A549 (cell line): ENCODE measurements at regions of chr13 and their contacts with region 1.

Region 1: DNA sequence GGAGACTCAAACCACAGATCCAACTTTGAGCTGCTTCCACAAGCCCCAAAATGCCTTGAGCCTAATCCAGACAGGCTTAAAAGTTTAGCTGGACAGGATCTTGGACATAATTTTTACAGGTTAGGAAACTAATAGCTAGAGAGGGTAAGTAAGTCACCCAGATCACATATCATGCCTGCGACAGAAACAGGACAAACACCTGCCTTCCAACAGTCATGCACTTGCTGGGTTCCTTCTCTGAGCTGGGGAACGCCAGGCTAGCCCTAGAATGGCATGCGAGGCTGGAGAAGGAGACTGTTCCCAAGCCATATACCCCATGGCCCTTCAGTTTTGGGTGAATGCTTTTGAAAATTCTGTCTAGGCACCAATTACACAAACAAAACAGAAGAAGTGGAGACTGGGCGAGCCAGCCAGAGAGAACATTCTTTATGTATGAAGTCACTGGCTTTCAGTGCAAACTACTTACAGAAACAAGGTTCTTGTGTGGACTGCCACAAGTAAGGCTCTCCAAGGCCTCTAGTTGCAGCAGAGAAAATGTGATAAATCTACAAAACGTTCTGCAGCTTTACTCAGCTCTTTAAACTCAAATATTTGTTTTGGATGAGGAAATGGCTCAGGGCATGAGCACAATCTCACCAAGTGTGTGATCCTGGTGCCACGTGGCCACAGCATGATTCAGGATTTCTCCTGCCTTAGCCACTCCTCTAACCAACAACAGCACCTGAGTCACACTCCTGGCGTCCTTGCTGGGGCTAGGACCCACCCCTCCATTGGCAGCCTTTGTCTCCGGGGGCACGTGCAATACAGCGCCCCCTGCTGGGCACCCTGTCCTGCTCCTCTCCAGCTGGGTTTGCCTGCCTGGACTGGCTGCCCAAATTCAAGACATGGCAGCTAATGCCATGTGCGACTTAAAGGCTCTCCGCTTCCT is 73.4 kb upstream of the UBL3 start:
- DNase-seq: peak; percentile 87 to 98
- ATAC-seq: peak; percentile 92 to 93
- H3K4me3 ChIP-seq: 0 out of 3 replicates have a peak overlapping the region, but pooled peaks have one; percentile 14
- H3K27ac ChIP-seq: peak overlapping the region; percentile 94 to 99
- H3K4me1 ChIP-seq: peaks cover 60% of the 10 kb centered on the region
- CTCF ChIP-seq: peak; percentile 73
- EP300 ChIP-seq: peak; percentile 72 to 75; a peak in 2 of 5 replicates
- POLR2A ChIP-seq: no peak
- RAD21 ChIP-seq: peak; percentile 52 to 56

Region 2: DNA sequence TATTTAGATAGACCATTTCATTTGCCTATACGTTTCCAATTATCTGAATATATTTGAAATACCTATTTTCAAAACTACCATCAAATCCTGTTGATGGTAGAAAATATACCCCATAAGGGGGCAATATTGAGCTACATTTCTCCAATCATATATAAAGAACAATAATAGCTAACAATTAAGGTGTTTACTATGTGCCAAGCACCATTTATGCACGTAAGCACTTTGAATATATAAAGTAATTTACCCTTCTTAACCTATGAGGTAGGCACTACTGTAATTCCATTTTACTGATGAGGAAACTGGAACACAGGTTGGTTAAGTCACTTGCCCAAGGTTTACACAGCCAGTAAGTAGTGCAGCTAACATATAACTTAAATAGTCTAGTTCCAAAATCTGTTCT is 152.6 kb before region 1 on chr13:
- CTCF ChIA-PET with region 1: interaction called, 15 read pairs
- POLR2A ChIA-PET with region 1: interaction called, 3 read pairs
- DNase-seq: peak in 1 of 2 experiments; percentile 36
- ATAC-seq: peak in 1 of 2 experiments; percentile 56; a peak in 2 of 6 replicates
- H3K4me3 ChIP-seq: no peak overlapping the region
- H3K27ac ChIP-seq: no peak overlapping the region
- H3K4me1 ChIP-seq: peaks cover 3% of the 10 kb centered on the region; the same call in 1 of the 3 replicates
- CTCF ChIP-seq: peak; percentile 60
- EP300 ChIP-seq: no peak
- POLR2A ChIP-seq: no peak
- RAD21 ChIP-seq: peak; percentile 72 to 75

Region 3: DNA sequence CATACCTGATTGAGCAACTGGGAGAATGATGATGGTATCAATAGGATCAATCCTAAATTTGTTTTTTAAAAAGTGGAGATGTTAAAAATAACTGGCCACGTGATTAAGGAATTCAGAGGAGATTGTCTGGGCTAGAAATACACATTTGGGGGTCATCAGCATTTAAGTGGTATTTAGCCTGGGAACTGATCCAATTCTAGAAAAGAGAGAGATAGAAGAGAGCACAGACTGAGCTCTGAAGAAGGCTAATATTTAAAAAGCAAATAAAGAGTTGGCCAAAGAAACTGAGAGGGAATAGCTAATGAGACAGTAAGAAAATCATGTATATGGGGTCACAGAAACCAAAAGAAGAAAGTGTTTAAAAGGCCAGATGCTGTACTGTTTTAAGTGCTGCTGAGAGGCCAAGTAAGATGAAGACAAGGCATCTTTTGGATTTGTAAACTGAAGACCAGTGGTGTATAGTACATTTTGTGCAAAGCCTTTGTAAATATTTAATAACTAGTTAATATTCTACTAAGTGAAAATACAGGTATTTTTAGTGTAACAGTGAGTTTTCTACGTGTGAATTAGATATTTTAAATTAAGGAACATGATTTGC is 113.6 kb before region 1 on chr13:
- CTCF ChIA-PET with region 1: no interaction called
- POLR2A ChIA-PET with region 1: no interaction called
- DNase-seq: no peak
- ATAC-seq: no peak
- H3K4me3 ChIP-seq: no peak overlapping the region
- H3K27ac ChIP-seq: no peak overlapping the region; a peak in 1 of 6 replicates
- H3K4me1 ChIP-seq: peaks cover 17% of the 10 kb centered on the region; the same call in 2 of the 3 replicates
- CTCF ChIP-seq: no peak
- EP300 ChIP-seq: no peak
- POLR2A ChIP-seq: no peak
- RAD21 ChIP-seq: no peak

Region 4: GRCh38 chr13:29850224-29850898 is 73.5 kb before region 1 on chr13 and contains the start of gene UBL3:
- CTCF ChIA-PET with region 1: interaction called, 51 read pairs
- POLR2A ChIA-PET with region 1: interaction called, 61 read pairs
- DNase-seq: peak; percentile 87 to 94
- ATAC-seq: peak; percentile 89
- H3K4me3 ChIP-seq: peak within 1 kb of the TSS; percentile 65
- H3K27ac ChIP-seq: peak within 1 kb of the TSS; percentile 91 to 97
- H3K4me1 ChIP-seq: peaks cover 37% of the 10 kb centered on the region
- CTCF ChIP-seq: no peak
- EP300 ChIP-seq: no peak
- POLR2A ChIP-seq: peak; percentile 55
- RAD21 ChIP-seq: no peak
- polyA plus RNA-seq, gene UBL3: 13.5 and 17.1 TPM in 2 replicates

Region 5: DNA sequence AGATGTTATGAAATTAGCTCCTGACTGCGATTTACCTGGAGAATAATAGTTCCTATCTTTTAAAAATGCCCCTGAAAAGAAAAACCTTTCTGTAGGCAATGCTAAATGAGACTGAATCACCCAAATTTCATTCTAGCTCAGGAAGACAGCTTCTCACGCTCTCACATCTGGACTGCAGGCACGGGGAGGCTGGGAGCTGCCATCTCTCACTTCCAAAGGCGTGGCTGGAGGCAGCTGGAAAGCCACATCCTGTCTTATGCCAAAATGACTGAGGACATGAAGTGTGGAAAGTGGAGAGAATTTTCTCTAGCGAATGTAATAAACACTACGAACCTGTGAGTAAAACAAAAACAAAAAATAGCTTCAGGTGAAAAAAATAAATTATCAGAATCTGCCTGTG is 15.4 kb before region 1 on chr13:
- CTCF ChIA-PET with region 1: interaction called, 11 read pairs
- POLR2A ChIA-PET with region 1: no interaction called
- DNase-seq: no peak
- ATAC-seq: no peak
- H3K4me3 ChIP-seq: no peak overlapping the region
- H3K27ac ChIP-seq: no peak overlapping the region
- H3K4me1 ChIP-seq: peaks cover 18% of the 10 kb centered on the region
- CTCF ChIP-seq: no peak
- EP300 ChIP-seq: no peak
- POLR2A ChIP-seq: no peak
- RAD21 ChIP-seq: no peak

Region 6: GRCh38 chr13:29935309-29935981 is 11.6 kb after region 1 on chr13:
- CTCF ChIA-PET with region 1: interaction called, 11 read pairs
- POLR2A ChIA-PET with region 1: no interaction called
- DNase-seq: no peak
- ATAC-seq: no peak
- H3K4me3 ChIP-seq: no peak overlapping the region
- H3K27ac ChIP-seq: no peak overlapping the region
- H3K4me1 ChIP-seq: no peaks in the 10 kb centered on the region
- CTCF ChIP-seq: no peak
- EP300 ChIP-seq: no peak
- POLR2A ChIP-seq: no peak
- RAD21 ChIP-seq: no peak

Region 7: DNA sequence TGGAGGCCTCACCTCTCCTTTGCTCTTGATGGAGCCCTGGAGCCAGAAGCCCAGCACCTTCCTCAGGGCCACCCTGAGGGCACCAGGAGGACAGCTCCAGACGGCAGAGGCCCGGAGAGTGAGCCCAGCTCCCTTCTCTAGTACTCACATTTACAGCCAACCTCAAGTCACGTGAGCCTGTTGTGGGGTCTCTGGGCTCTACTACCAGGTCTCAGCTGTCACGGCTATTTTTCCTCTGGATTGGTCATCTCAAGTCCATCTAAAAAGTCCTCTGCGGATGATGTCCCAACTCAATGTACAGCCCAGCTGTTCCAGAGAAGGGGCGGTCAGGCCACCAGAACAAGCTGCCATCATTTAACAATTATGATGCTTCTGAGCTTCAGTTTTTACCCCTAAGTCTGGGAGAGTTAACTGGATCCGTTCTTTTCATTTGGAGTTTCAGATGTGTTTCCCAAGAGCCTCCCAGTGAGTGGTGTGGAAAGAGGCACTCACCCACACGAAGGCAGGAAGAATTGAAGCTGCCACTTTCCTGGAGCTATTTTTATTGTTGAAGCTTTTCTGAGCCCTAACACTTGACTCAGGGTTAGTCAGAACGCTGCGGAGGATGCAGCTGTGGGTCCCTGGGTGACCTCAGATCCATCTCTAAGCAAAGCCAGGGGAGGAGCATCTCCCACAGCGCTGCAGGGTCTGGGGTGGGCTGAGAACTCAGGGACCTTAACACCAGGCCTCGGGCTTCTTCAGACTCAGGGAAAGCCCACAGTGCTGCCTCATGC is 70.1 kb after region 1 on chr13:
- CTCF ChIA-PET with region 1: interaction called, 13 read pairs
- POLR2A ChIA-PET with region 1: no interaction called
- DNase-seq: no peak
- ATAC-seq: no peak
- H3K4me3 ChIP-seq: no peak overlapping the region
- H3K27ac ChIP-seq: no peak overlapping the region
- H3K4me1 ChIP-seq: no peaks in the 10 kb centered on the region
- CTCF ChIP-seq: no peak
- EP300 ChIP-seq: no peak
- POLR2A ChIP-seq: no peak
- RAD21 ChIP-seq: no peak

Region 8: GRCh38 chr13:30088312-30088855 is 164.6 kb after region 1 on chr13:
- CTCF ChIA-PET with region 1: no interaction called
- POLR2A ChIA-PET with region 1: no interaction called
- DNase-seq: no peak
- ATAC-seq: no peak
- H3K4me3 ChIP-seq: no peak overlapping the region
- H3K27ac ChIP-seq: no peak overlapping the region
- H3K4me1 ChIP-seq: no peaks in the 10 kb centered on the region
- CTCF ChIP-seq: no peak
- EP300 ChIP-seq: no peak
- POLR2A ChIP-seq: no peak
- RAD21 ChIP-seq: no peak

Region 9: DNA sequence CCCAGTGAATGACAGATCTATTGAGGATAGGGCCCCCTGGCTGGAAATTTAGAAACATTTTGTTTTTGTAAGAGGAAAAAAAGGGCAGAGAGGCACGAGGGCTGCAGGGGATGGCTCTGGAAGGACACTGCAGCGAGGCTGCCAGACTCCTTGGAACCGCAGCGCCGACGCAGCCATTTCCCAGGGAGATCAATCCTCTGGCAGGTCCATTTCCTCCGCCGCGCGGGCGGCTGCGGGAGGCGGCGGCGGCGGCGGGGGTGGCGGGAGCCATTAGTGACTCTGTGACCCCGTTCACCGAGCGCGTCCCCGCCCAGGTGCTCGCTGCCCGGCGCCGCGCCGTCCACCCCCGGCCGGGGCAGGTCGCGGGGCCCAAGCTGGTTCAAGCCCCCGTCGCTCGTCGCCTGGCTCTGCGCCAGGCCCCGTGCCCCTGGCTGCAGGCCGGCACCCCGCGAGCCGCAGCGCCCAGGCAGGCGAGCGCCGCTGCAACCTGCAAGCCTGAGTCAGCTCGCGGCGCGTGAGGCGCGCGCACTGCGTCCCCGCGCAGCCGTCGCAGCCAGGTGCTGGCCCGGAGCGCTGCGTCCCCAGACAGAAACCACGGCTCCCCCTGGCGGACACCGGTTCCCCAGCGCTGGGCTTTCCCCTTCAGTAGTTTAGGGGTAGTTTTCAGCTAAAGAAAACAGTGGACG is 190.9 kb after region 1 on chr13:
- CTCF ChIA-PET with region 1: interaction called, 66 read pairs
- POLR2A ChIA-PET with region 1: interaction called, 4 read pairs
- DNase-seq: peak; percentile 60 to 80
- ATAC-seq: peak; percentile 88 to 91
- H3K4me3 ChIP-seq: peak overlapping the region; percentile 65
- H3K27ac ChIP-seq: peak overlapping the region; percentile 87 to 99
- H3K4me1 ChIP-seq: peaks cover 13% of the 10 kb centered on the region
- CTCF ChIP-seq: peak; percentile 71
- EP300 ChIP-seq: no peak
- POLR2A ChIP-seq: peak; percentile 66
- RAD21 ChIP-seq: peak; percentile 74 to 84